Activated CD4-positive, alpha-beta T cell treated with anti-CD3 and anti-CD28 coated beads, Interleukin-2, amount 10 ng/mL, durations not matched to agents 24 days and 14 days (primary cell): ENCODE measurements at regions of chr2 and their contacts with region 1.

Region 1: GRCh38 chr2:105858868-105859693 is 114.4 kb downstream of the NCK2 start:
- DNase-seq: peak; percentile 67
- H3K4me3 Mint-ChIP-seq: peak overlapping the region; percentile 74
- H3K27ac Mint-ChIP-seq: peak overlapping the region; percentile 92
- H3K4me1 Mint-ChIP-seq: peaks cover 77% of the 10 kb centered on the region
- H3K27me3 Mint-ChIP-seq: no peaks in the 10 kb centered on the region

Region 2: GRCh38 chr2:105797298-105797819 is 61.7 kb before region 1 on chr2:
- intact Hi-C with region 1: loop called (anchors 1 kb)
- DNase-seq: peak; percentile 85
- H3K4me3 Mint-ChIP-seq: peak overlapping the region; percentile 63
- H3K27ac Mint-ChIP-seq: peak overlapping the region; percentile 93
- H3K4me1 Mint-ChIP-seq: peaks cover 80% of the 10 kb centered on the region
- H3K27me3 Mint-ChIP-seq: no peaks in the 10 kb centered on the region

Region 3: DNA sequence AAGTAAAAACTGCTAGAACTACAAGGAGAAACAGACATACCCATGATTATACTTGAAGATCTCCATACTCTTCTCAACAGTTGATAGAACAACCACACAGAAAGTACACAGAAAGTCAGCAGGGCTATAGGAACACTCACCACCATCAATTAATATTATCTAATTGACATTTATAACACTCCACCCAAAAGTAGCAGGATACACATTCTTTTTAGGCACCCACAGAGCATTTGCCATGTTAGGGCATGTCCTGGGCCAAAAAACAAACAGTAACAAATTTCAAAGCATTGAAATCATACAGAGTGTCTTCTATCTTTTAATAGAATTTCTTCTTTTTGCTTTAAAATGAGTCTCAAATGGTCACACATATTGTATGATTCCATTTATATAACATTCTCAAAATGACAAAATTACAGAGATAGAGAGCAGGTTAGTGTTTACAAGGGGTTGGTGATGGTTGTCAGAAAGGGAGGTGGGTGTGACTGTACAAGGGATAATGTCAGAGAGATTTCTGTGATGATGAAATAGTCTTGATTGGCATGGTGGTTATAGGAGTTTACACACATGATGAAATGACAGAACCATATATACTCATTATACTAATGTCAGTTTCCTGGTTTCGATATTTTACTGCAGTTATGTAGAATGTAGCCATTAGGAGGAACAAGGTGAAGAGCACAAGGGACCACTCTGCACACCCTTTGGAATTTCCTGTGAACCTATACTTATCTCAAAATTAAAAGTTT is 31.6 kb before region 1 on chr2:
- intact Hi-C with region 1: loop called (anchors 1 kb)
- DNase-seq: no peak
- H3K4me3 Mint-ChIP-seq: no peak overlapping the region
- H3K27ac Mint-ChIP-seq: peak overlapping the region; percentile 25
- H3K4me1 Mint-ChIP-seq: peaks cover 66% of the 10 kb centered on the region
- H3K27me3 Mint-ChIP-seq: no peaks in the 10 kb centered on the region

Region 4: DNA sequence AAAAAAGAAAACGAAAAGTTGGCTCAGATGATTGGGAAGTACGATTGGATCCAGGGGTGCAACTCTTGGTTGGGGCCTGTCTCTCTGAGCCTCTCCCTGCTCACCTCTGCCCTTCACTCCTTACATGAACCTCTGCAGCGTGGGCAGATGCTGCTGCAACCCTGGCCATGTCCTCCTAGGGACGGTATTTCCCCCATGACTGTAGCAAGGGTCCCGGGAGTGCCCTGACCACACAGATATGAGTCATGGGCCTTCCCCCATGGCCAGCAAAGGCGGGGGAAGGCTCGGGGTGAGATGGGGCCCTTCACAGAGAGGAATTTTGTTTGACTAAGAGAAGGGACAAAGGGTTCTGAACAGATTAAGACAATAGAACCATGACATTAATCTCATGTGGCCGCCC is 14.6 kb after region 1 on chr2:
- intact Hi-C with region 1: loop called (anchors 1 kb)
- DNase-seq: peak; percentile 78
- H3K4me3 Mint-ChIP-seq: peak overlapping the region; percentile 59
- H3K27ac Mint-ChIP-seq: peak overlapping the region; percentile 84
- H3K4me1 Mint-ChIP-seq: peaks cover 74% of the 10 kb centered on the region
- H3K27me3 Mint-ChIP-seq: no peaks in the 10 kb centered on the region

Region 5: GRCh38 chr2:105888625-105889400 is 29.7 kb after region 1 on chr2:
- intact Hi-C with region 1: no loop called
- DNase-seq: no peak
- H3K4me3 Mint-ChIP-seq: no peak overlapping the region
- H3K27ac Mint-ChIP-seq: no peak overlapping the region
- H3K4me1 Mint-ChIP-seq: peaks cover 40% of the 10 kb centered on the region
- H3K27me3 Mint-ChIP-seq: no peaks in the 10 kb centered on the region

Region 6: GRCh38 chr2:105919826-105920225 is 60.7 kb after region 1 on chr2:
- intact Hi-C with region 1: no loop called
- DNase-seq: peak; percentile 83
- H3K4me3 Mint-ChIP-seq: no peak overlapping the region
- H3K27ac Mint-ChIP-seq: no peak overlapping the region
- H3K4me1 Mint-ChIP-seq: peaks cover 12% of the 10 kb centered on the region
- H3K27me3 Mint-ChIP-seq: no peaks in the 10 kb centered on the region

Region 7: GRCh38 chr2:106098081-106098480 is 239.0 kb after region 1 on chr2:
- intact Hi-C with region 1: loop called (anchors 2 kb)
- DNase-seq: peak; percentile 75
- H3K4me3 Mint-ChIP-seq: no peak overlapping the region
- H3K27ac Mint-ChIP-seq: no peak overlapping the region
- H3K4me1 Mint-ChIP-seq: peaks cover 27% of the 10 kb centered on the region
- H3K27me3 Mint-ChIP-seq: no peaks in the 10 kb centered on the region